ENCODE measurements at regions of chr2 and their contacts with region 1.

Region 1: GRCh38 chr2:170235860-170236679 is 58.1 kb downstream of the MYO3B start:
- DNase-seq: peak; percentile 83 to 89 (median 84)
- ATAC-seq: peak; percentile 89
- H3K4me3 ChIP-seq: no peak overlapping the region
- H3K27ac ChIP-seq: no peak overlapping the region; the same call in 1 of the 3 replicates
- H3K4me1 ChIP-seq: peaks cover 0 to 57% of the 10 kb centered on the region in 2 experiments; a peak in 3 of 5 replicates
- H3K27me3 ChIP-seq: no peaks in the 10 kb centered on the region
- CTCF ChIP-seq: peak; percentile 69 to 92 (median 86)
- EP300 ChIP-seq: peak; percentile 94
- POLR2A ChIP-seq: no peak
- RAD21 ChIP-seq: peak; percentile 99

Region 2: GRCh38 chr2:170005484-170006101 is 230.5 kb before region 1 on chr2:
- CTCF ChIA-PET with region 1: interaction called, 4 read pairs
- POLR2A ChIA-PET with region 1: no interaction called
- in situ Hi-C with region 1: no loop called
- intact Hi-C with region 1: loop called (anchors 2 kb)
- DNase-seq: peak in 3 of 4 experiments; percentile 19 to 72 (median 66)
- ATAC-seq: peak; percentile 92
- H3K4me3 ChIP-seq: no peak overlapping the region
- H3K27ac ChIP-seq: no peak overlapping the region
- H3K4me1 ChIP-seq: peaks cover 4 to 11% of the 10 kb centered on the region in 2 experiments
- H3K27me3 ChIP-seq: no peaks in the 10 kb centered on the region
- CTCF ChIP-seq: peak; percentile 76 to 93 (median 76)
- EP300 ChIP-seq: no peak
- POLR2A ChIP-seq: no peak
- RAD21 ChIP-seq: peak; percentile 85 to 95

Region 3: GRCh38 chr2:170262806-170263205 is 26.7 kb after region 1 on chr2:
- CTCF ChIA-PET with region 1: no interaction called
- POLR2A ChIA-PET with region 1: no interaction called
- in situ Hi-C with region 1: no loop called
- intact Hi-C with region 1: loop called (anchors 1 kb)
- DNase-seq: no peak
- ATAC-seq: no peak
- H3K4me3 ChIP-seq: no peak overlapping the region
- H3K27ac ChIP-seq: peak overlapping the region; percentile 86; the same call in 1 of the 3 replicates
- H3K4me1 ChIP-seq: peaks cover 26 to 48% of the 10 kb centered on the region in 2 experiments
- H3K27me3 ChIP-seq: no peaks in the 10 kb centered on the region
- CTCF ChIP-seq: no peak
- EP300 ChIP-seq: no peak
- POLR2A ChIP-seq: no peak
- RAD21 ChIP-seq: no peak

Region 4: GRCh38 chr2:170324640-170325046 is 88.6 kb after region 1 on chr2:
- CTCF ChIA-PET with region 1: interaction called, 4 read pairs
- POLR2A ChIA-PET with region 1: no interaction called
- in situ Hi-C with region 1: loop called (anchors 5 kb)
- intact Hi-C with region 1: loop called (anchors 1 kb)
- DNase-seq: peak; percentile 42 to 85 (median 60)
- ATAC-seq: peak; percentile 95
- H3K4me3 ChIP-seq: no peak overlapping the region
- H3K27ac ChIP-seq: no peak overlapping the region
- H3K4me1 ChIP-seq: peaks cover 0 to 22% of the 10 kb centered on the region in 2 experiments; a peak in 4 of 5 replicates
- H3K27me3 ChIP-seq: no peaks in the 10 kb centered on the region
- CTCF ChIP-seq: peak; percentile 93 to 95 (median 93)
- EP300 ChIP-seq: peak; percentile 45; the same call in 1 of the 2 replicates
- POLR2A ChIP-seq: no peak
- RAD21 ChIP-seq: peak; percentile 99

Region 5: DNA sequence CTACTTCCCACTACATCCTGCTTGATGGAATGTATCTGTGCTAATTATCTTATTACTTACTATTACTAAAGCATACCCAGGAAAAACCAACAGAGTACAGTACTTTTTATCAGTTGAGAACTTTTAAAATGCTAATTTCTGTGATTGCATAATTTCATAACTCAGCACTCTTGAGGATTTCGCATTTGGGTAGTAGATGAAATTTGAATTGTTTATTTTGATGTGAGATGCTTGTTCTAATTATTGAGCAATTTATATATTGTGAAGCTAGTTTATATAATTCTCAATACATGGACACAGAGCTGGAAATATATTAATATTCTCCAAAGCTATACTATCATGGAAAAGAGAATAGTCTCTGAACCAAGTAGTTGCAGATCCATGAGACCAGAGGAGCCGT is 374.5 kb after region 1 on chr2:
- CTCF ChIA-PET with region 1: no interaction called
- POLR2A ChIA-PET with region 1: no interaction called
- in situ Hi-C with region 1: loop called (anchors 10 kb)
- intact Hi-C with region 1: no loop called
- DNase-seq: no peak
- ATAC-seq: no peak
- H3K4me3 ChIP-seq: no peak overlapping the region
- H3K27ac ChIP-seq: no peak overlapping the region
- H3K4me1 ChIP-seq: no peaks in the 10 kb centered on the region
- H3K27me3 ChIP-seq: peaks cover 3 to 14% of the 10 kb centered on the region in 2 experiments; a peak in 3 of 5 replicates
- CTCF ChIP-seq: no peak
- EP300 ChIP-seq: no peak
- POLR2A ChIP-seq: no peak
- RAD21 ChIP-seq: no peak

Measured in K562 (cell line).